Gastrocnemius medialis (tissue), 4 donors: ENCODE measurements at regions of chr14 and their contacts with region 1.

Region 1: GRCh38 chr14:30375296-30375892 is 183.6 kb upstream of the G2E3 start:
- DNase-seq: peak; percentile 6 to 44
- ATAC-seq: peak; percentile 50 to 60
- H3K4me3 ChIP-seq: no peak overlapping the region
- H3K27ac ChIP-seq: no peak overlapping the region
- H3K4me1 ChIP-seq: no peaks in the 10 kb centered on the region
- H3K27me3 ChIP-seq: no peaks in the 10 kb centered on the region
- CTCF ChIP-seq: peak; percentile 41 to 75 (median 68)
- POLR2A ChIP-seq: no peak

Region 2: GRCh38 chr14:30521899-30522736 is 146.7 kb after region 1 on chr14:
- in situ Hi-C with region 1: no loop called
- intact Hi-C with region 1: loop called (anchors 5 kb)
- DNase-seq: no peak
- ATAC-seq: no peak
- H3K4me3 ChIP-seq: no peak overlapping the region
- H3K27ac ChIP-seq: no peak overlapping the region
- H3K4me1 ChIP-seq: no peaks in the 10 kb centered on the region
- H3K27me3 ChIP-seq: no peaks in the 10 kb centered on the region
- CTCF ChIP-seq: peak; percentile 21 to 75 (median 60)
- POLR2A ChIP-seq: no peak